ENCODE measurements at regions of chr17 and their contacts with region 1.

Region 1: DNA sequence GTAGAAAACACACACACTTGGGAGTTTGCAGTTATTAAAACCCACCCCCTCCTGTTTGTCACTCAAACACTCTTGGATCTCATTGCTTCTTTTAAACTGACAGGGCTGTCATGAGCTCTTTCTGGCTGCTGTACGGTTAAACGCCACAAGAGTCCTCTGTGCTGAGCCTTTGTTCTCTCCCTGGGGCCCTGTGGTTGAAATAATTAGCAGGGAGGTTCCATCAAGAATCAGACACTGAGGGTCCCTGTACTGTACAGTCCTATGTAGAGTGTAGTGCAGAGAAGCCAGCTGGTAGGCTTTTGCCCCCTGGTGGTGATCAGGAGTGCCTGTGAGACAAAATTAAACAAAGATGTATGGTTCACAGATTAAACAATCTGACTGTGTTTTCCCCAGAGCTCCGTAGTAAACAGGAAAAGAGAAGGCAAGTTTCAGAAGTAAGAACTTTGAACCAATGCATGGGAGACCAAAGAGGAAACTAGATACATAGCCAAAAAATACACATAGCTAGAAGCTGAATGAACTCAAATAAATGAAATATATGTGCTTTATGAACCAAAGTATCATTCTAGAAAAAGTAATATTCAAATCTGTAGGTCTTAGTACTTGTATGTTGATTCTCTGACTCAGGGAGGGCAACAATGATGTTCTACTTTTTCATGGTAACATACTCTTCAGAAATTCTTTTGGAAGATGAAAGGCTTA is 1.4 kb upstream of the SSH2 start:
- DNase-seq: peak; percentile 82
- H3K4me3 Mint-ChIP-seq: no peak overlapping the region
- H3K27ac Mint-ChIP-seq: no peak overlapping the region
- H3K4me1 Mint-ChIP-seq: peaks cover 24% of the 10 kb centered on the region
- H3K27me3 Mint-ChIP-seq: no peaks in the 10 kb centered on the region

Region 2: GRCh38 chr17:29640413-29640812 is 291.0 kb before region 1 on chr17:
- CTCF ChIA-PET with region 1: interaction called, 10 read pairs
- POLR2A ChIA-PET with region 1: no interaction called
- DNase-seq: no peak
- H3K4me3 Mint-ChIP-seq: no peak overlapping the region
- H3K27ac Mint-ChIP-seq: no peak overlapping the region
- H3K4me1 Mint-ChIP-seq: peaks cover 19% of the 10 kb centered on the region
- H3K27me3 Mint-ChIP-seq: no peaks in the 10 kb centered on the region

Region 3: GRCh38 chr17:29807520-29808351 is 123.6 kb before region 1 on chr17:
- CTCF ChIA-PET with region 1: interaction called, 51 read pairs
- POLR2A ChIA-PET with region 1: no interaction called
- DNase-seq: peak; percentile 82
- H3K4me3 Mint-ChIP-seq: no peak overlapping the region
- H3K27ac Mint-ChIP-seq: no peak overlapping the region
- H3K4me1 Mint-ChIP-seq: peaks cover 26% of the 10 kb centered on the region
- H3K27me3 Mint-ChIP-seq: no peaks in the 10 kb centered on the region

Region 4: DNA sequence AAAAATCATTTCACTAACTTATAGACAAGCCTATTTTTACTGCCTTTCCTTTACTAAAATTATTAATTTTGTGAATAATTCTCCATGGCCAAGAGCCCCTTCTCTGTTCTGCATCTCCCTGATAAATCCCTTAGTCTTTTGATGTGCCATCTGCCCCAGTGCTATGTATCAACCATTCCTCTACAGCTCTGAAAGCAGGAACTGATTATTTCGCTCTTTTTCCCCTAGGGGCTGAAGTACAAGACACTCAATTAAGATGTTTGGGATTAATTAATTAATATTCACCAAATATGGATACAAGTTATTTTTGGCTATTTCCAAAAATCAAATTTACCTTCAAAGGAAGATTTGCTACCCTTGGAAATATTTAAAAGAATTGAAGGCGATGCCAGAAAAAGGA is 27.9 kb before region 1 on chr17:
- CTCF ChIA-PET with region 1: no interaction called
- POLR2A ChIA-PET with region 1: no interaction called
- DNase-seq: no peak
- H3K4me3 Mint-ChIP-seq: no peak overlapping the region
- H3K27ac Mint-ChIP-seq: no peak overlapping the region
- H3K4me1 Mint-ChIP-seq: peaks cover 24% of the 10 kb centered on the region
- H3K27me3 Mint-ChIP-seq: no peaks in the 10 kb centered on the region

Region 5: GRCh38 chr17:29918922-29919856 is 12.2 kb before region 1 on chr17:
- CTCF ChIA-PET with region 1: interaction called, 24 read pairs
- POLR2A ChIA-PET with region 1: no interaction called
- DNase-seq: no peak
- H3K4me3 Mint-ChIP-seq: no peak overlapping the region
- H3K27ac Mint-ChIP-seq: no peak overlapping the region
- H3K4me1 Mint-ChIP-seq: peaks cover 13% of the 10 kb centered on the region
- H3K27me3 Mint-ChIP-seq: no peaks in the 10 kb centered on the region